ENCODE measurements at regions of chr12 and their contacts with region 1.

Region 1: DNA sequence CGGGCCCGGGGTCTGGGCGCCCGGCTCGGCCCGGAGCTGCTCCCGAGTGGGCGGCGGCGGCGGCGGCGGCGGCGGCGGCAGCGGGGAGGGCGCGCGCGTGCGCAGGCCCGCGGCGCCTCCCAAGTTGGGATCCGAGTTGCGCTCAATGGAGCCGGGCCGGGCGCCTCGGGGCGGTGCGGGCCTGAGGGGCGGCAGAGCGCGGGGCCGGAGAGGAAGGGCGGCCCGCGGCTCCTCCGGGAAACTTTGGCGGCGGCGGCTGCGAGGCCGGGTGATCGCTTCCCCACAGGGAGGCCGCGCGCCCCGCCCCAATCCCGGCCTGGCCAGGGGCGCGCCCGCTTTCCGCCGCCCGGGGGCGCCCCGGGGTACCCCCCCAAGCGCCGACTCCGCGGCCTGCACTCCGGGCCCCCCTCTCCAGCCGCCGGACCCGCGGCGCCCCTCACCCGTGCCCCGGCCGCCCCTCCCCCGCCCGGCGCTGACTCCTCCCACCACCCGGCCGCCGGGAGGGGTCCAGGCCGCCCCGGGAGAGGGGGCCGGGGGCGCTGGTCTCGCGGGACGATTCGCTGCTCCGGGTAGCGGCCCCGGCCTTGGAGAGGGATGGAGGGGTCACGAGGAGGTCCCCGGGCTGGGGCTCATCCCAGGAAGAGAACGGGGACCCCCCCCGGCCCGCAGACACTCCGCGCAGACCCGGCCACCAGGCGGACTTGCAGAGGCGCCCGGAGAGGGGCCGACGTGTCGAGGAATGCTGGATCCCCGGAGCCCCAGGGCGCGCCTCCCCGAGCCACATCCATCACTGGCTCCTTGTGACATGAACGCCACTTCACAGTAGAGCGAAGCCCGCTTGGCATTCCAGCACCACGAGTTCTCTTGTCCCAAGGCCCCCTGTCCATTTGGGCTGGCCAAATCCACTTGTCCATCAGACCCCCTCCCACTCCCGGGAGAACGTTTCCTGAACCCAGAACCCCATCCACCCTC is at the start of gene RILPL1:
- DNase-seq: peak; percentile 58
- ATAC-seq: peak; percentile 83
- H3K4me3 ChIP-seq: peak within 1 kb of the TSS; percentile 65 to 93 (median 85)
- H3K27ac ChIP-seq: peak within 1 kb of the TSS; percentile 76
- H3K4me1 ChIP-seq: peaks cover 44% of the 10 kb centered on the region
- H3K27me3 ChIP-seq: no peaks in the 10 kb centered on the region
- CTCF ChIP-seq: peak; percentile 2; the same call in 1 of the 2 replicates
- EP300 ChIP-seq: no peak
- POLR2A ChIP-seq: peak in 1 of 2 experiments; percentile 2; a peak in 1 of 4 replicates
- RAD21 ChIP-seq: no peak; the same call in none of the 2 replicates
- total RNA-seq, gene RILPL1: 3.9 and 5.8 TPM in 2 replicates

Region 2: GRCh38 chr12:123075646-123076171 is 458.2 kb before region 1 on chr12:
- CTCF ChIA-PET with region 1: no interaction called
- POLR2A ChIA-PET with region 1: no interaction called
- in situ Hi-C with region 1: no loop called
- intact Hi-C with region 1: no loop called
- DNase-seq: peak; percentile 78
- ATAC-seq: peak; percentile 89
- H3K4me3 ChIP-seq: peak overlapping the region in 2 of 3 experiments; percentile 27 to 56; a peak in 3 of 6 replicates
- H3K27ac ChIP-seq: peak overlapping the region; percentile 43
- H3K4me1 ChIP-seq: peaks cover 63% of the 10 kb centered on the region
- H3K27me3 ChIP-seq: no peaks in the 10 kb centered on the region
- CTCF ChIP-seq: peak; percentile 73
- EP300 ChIP-seq: no peak
- POLR2A ChIP-seq: no peak
- RAD21 ChIP-seq: no peak

Region 3: DNA sequence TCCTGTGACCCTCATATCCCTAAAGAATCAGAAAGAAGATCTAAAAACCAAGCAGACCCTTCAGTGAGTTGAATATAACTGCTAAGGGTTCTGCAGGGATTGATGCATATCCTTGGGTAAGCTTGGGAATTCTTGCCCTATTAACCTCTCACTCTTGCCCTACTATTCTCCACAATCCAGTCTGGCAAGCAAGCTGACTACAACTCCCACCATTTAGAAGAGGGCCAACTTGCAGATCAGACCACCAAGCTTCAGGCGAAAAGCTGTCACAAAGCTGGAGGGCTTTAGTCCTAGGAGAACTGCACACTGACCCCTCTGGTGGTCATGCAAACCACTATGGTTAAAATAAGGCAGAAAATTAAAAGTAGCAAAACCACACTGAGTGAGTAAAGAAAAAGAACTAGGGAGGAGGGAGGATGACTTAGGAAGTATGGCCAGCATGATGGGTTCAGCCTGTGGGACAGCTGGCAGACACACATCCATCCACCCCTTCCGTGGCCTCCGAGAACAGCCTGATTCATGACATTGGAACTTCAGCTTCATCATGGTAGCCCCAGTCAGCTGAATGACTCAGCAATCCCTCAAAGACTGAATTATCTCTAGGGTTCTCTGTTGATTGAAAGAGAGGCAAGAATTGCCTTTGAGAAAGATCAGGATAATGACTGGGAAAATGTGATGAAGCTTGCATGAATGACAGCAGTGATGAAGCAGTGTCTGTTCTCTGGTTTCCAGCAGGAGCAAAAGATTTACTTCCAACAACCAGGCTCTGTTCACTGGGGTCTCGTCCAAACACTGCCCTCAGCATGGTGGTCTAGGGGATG is 407.6 kb before region 1 on chr12:
- CTCF ChIA-PET with region 1: no interaction called
- POLR2A ChIA-PET with region 1: no interaction called
- in situ Hi-C with region 1: no loop called
- intact Hi-C with region 1: no loop called
- DNase-seq: peak; percentile 83
- ATAC-seq: peak; percentile 85
- H3K4me3 ChIP-seq: no peak overlapping the region
- H3K27ac ChIP-seq: peak overlapping the region; percentile 43
- H3K4me1 ChIP-seq: peaks cover 32% of the 10 kb centered on the region
- H3K27me3 ChIP-seq: no peaks in the 10 kb centered on the region
- CTCF ChIP-seq: no peak
- EP300 ChIP-seq: peak in 1 of 2 experiments; percentile 61; a peak in 2 of 4 replicates
- POLR2A ChIP-seq: no peak
- RAD21 ChIP-seq: no peak

Region 4: GRCh38 chr12:123571343-123571813 is 37.4 kb after region 1 on chr12:
- CTCF ChIA-PET with region 1: no interaction called
- POLR2A ChIA-PET with region 1: no interaction called
- in situ Hi-C with region 1: no loop called
- intact Hi-C with region 1: loop called (anchors 2 kb)
- DNase-seq: peak; percentile 56
- ATAC-seq: peak; percentile 93
- H3K4me3 ChIP-seq: peak overlapping the region; percentile 37 to 56 (median 38); a peak in 5 of 6 replicates
- H3K27ac ChIP-seq: no peak overlapping the region
- H3K4me1 ChIP-seq: peaks cover 29% of the 10 kb centered on the region
- H3K27me3 ChIP-seq: no peaks in the 10 kb centered on the region; a peak in 1 of 5 replicates
- CTCF ChIP-seq: no peak
- EP300 ChIP-seq: no peak
- POLR2A ChIP-seq: no peak
- RAD21 ChIP-seq: no peak

Region 5: DNA sequence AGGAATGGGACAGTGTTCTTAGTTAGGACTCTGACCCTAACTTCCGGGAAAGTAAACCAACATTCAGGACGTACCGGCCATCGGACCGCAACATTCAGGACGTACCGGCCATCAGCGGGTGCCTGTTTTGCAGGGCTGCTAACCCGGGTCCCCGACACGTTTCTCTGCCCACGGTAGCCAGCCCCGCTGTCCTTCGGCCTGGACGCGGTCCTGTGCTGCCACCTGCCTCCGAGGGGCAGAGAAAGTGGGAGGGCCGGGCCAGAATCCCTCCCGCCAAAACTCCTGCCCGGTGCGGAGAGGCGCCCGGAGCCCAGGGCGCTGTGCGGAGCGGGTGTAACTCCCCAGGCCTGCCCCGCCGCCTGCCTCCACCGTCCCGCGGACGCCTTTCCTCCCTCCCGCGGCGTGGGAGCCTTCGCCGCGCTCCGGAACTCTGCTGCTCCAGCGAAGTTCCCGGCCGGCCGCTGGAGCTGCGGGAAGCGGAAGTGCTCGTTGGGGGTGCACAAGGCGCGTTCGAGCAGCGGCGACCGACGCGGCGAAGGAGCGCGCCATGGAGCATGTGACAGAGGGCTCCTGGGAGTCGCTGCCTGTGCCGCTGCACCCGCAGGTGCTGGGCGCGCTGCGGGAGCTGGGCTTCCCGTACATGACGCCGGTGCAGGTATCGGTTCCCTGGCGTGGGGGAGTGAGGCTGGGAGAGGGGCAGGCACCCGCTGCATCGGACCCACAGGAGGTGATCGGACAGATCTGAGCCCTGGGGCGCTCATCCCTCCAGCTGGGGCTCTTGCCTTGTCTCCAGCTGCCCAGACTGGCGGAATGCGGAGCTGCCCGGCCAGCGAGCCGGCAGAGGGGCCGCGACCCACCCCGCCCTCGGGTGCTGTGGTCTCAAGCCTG is 67.9 kb after region 1 on chr12 and contains the start of gene DDX55:
- CTCF ChIA-PET with region 1: no interaction called
- POLR2A ChIA-PET with region 1: no interaction called
- in situ Hi-C with region 1: no loop called
- intact Hi-C with region 1: no loop called
- DNase-seq: peak; percentile 73
- ATAC-seq: peak; percentile 92
- H3K4me3 ChIP-seq: peak within 1 kb of the TSS; percentile 93 to 100 (median 93)
- H3K27ac ChIP-seq: peak within 1 kb of the TSS; percentile 97
- H3K4me1 ChIP-seq: peaks cover 29% of the 10 kb centered on the region
- H3K27me3 ChIP-seq: no peaks in the 10 kb centered on the region
- CTCF ChIP-seq: peak; percentile 90
- EP300 ChIP-seq: peak; percentile 32 to 42; a peak in 1 of 4 replicates
- POLR2A ChIP-seq: peak; percentile 84 to 98
- RAD21 ChIP-seq: peak; percentile 93
- total RNA-seq, gene DDX55: 29.5 and 37.0 TPM in 2 replicates

Region 6: GRCh38 chr12:123633379-123634141 is 99.6 kb after region 1 on chr12 and contains the starts of genes EIF2B1 and GTF2H3:
- CTCF ChIA-PET with region 1: no interaction called
- POLR2A ChIA-PET with region 1: no interaction called
- in situ Hi-C with region 1: no loop called
- intact Hi-C with region 1: no loop called
- DNase-seq: peak; percentile 96
- ATAC-seq: peak; percentile 98
- H3K4me3 ChIP-seq: peak within 1 kb of the TSS; percentile 91 to 98 (median 96)
- H3K27ac ChIP-seq: peak within 1 kb of the TSS; percentile 91
- H3K4me1 ChIP-seq: peaks cover 16% of the 10 kb centered on the region
- H3K27me3 ChIP-seq: no peaks in the 10 kb centered on the region; a peak in 1 of 5 replicates
- CTCF ChIP-seq: peak; percentile 43
- EP300 ChIP-seq: peak in 1 of 2 experiments; percentile 56; a peak in 1 of 4 replicates
- POLR2A ChIP-seq: peak; percentile 98 to 99
- RAD21 ChIP-seq: peak; percentile 46
- total RNA-seq, gene EIF2B1: 37.4 and 45.1 TPM in 2 replicates
- total RNA-seq, gene GTF2H3: 58.8 and 88.6 TPM in 2 replicates

Measured in HepG2 (cell line).